ENCODE measurements at regions of chr4 and their contacts with region 1.

Region 1: DNA sequence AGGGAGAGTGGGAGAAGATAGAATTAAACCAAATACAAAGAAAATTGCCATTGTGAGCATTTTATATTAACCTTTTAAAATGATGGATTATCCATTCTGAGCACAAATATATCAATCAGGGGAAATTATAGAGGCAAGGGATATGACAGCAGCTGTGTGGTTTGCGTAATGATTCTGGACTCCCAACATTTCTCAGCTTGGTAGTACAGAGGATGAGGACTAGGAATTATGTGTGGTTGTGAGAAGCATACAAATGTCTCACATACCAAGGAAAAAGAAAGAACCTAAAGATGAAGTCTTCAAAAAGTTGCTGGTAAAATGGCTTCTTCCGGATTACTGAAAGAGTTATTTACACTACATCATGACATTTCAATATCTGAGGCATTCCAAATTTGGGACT is 674.6 kb upstream of the NR3C2 start:
- DNase-seq: no peak
- ATAC-seq: no peak
- H3K4me3 ChIP-seq: no peak overlapping the region
- H3K27ac ChIP-seq: no peak overlapping the region
- H3K4me1 ChIP-seq: no peaks in the 10 kb centered on the region
- H3K27me3 ChIP-seq: no peaks in the 10 kb centered on the region
- CTCF ChIP-seq: no peak
- POLR2A ChIP-seq: no peak
- RAD21 ChIP-seq: no peak

Region 2: DNA sequence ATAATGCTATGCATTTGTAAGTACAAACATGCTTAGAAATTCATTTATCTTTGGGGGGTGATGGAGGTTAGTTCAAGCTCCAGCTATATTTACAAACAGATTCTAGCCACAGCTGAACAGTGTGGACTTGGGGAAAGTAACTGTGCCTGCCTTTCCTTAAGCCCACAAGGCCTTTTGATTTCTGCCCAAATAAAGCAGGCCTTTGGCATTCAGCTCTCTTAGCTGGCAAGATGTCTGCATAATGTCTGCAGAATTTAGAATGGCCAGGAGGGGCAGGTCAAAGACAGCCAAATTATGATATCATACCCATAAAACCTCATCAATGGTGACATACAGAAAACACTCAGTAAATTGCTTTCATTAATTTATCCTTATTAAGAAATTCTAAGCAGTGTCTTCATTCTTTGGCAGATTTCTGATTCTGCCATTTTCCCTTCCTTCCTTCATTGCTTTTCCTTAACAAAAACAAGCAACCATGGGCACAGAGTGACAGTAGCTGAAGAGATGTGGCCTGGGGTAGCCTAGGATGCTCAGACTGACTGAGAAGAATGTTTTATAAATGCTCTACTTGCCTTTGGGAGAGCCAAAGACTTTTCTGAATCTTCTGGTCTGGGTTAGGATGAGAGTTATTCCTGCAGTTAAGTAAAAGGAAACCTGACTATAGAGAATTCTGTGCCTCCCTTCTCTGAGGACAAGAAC is 135.9 kb before region 1 on chr4:
- CTCF ChIA-PET with region 1: no interaction called
- POLR2A ChIA-PET with region 1: no interaction called
- RAD21 ChIA-PET with region 1: no interaction called
- intact Hi-C with region 1: no loop called
- DNase-seq: no peak
- ATAC-seq: no peak
- H3K4me3 ChIP-seq: no peak overlapping the region
- H3K27ac ChIP-seq: no peak overlapping the region
- H3K4me1 ChIP-seq: no peaks in the 10 kb centered on the region
- H3K27me3 ChIP-seq: no peaks in the 10 kb centered on the region
- CTCF ChIP-seq: no peak
- POLR2A ChIP-seq: no peak
- RAD21 ChIP-seq: no peak

Region 3: DNA sequence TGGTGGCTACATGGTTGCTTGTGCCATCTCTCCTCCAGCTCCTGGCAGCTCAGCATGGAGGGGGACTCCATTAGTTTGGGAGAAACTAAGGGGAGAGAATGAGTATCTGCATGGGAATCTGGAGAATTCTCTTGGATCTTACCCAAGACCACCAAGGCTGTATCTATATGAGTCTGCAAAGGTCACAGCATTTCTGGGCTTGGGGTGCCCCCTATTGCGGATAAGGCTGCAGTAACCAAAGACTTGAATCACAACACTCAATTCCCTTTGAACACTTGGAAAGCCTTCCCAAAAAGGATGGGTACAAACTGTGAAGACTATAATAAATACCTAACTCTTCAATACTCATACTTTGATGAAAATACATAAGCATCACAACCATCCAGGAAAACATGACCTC is 51.1 kb before region 1 on chr4:
- CTCF ChIA-PET with region 1: no interaction called
- POLR2A ChIA-PET with region 1: no interaction called
- RAD21 ChIA-PET with region 1: no interaction called
- intact Hi-C with region 1: no loop called
- DNase-seq: no peak
- ATAC-seq: no peak
- H3K4me3 ChIP-seq: no peak overlapping the region
- H3K27ac ChIP-seq: no peak overlapping the region
- H3K4me1 ChIP-seq: no peaks in the 10 kb centered on the region
- H3K27me3 ChIP-seq: no peaks in the 10 kb centered on the region
- CTCF ChIP-seq: no peak
- POLR2A ChIP-seq: no peak
- RAD21 ChIP-seq: peak; percentile 13; the same call in 1 of the 2 replicates

Region 4: GRCh38 chr4:149884046-149884445 is 767.2 kb after region 1 on chr4:
- CTCF ChIA-PET with region 1: no interaction called
- POLR2A ChIA-PET with region 1: no interaction called
- RAD21 ChIA-PET with region 1: no interaction called
- intact Hi-C with region 1: loop called (anchors 5 kb)
- DNase-seq: no peak
- ATAC-seq: no peak
- H3K4me3 ChIP-seq: no peak overlapping the region
- H3K27ac ChIP-seq: no peak overlapping the region
- H3K4me1 ChIP-seq: peaks cover 0 to 18% of the 10 kb centered on the region in 2 experiments; a peak in 2 of 4 replicates
- H3K27me3 ChIP-seq: no peaks in the 10 kb centered on the region
- CTCF ChIP-seq: no peak
- POLR2A ChIP-seq: no peak
- RAD21 ChIP-seq: no peak

Measured in HCT116 (cell line).